ENCODE measurements at regions of chr1 and their contacts with region 1.

Region 1: DNA sequence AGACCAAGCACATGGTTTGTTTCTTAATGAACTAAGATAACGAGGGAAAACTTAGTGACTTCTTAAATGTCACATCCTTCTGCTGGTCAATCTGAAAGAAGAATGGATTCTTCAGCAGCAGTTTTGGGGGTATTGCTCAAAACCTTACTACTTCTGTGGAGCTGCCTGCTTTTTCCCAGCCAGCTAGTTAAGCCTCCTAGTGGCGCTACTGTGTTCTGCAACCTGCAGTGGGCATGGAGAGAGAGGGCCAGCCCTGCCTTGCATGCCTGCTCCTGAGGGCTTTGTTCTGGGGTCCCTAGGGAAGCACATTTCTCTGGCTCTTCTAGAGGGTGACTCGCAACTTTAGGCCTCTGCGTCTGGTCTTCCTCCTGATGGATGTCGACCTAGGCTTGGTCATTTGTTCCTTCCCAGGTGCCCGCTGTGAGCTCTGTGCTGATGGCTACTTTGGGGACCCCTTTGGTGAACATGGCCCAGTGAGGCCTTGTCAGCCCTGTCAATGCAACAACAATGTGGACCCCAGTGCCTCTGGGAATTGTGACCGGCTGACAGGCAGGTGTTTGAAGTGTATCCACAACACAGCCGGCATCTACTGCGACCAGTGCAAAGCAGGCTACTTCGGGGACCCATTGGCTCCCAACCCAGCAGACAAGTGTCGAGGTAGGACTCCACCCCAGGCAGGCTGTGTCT is 42.0 kb downstream of the LAMC2 start:
- DNase-seq: peak in 5 of 9 experiments; percentile 15 to 52 (median 37)
- ATAC-seq: peak; percentile 42
- H3K4me3 ChIP-seq: no peak overlapping the region
- H3K4me3 Mint-ChIP-seq: no peak overlapping the region
- H3K27ac ChIP-seq: no peak overlapping the region
- H3K27ac Mint-ChIP-seq: no peak overlapping the region
- H3K4me1 ChIP-seq: no peaks in the 10 kb centered on the region
- H3K4me1 Mint-ChIP-seq: no peaks in the 10 kb centered on the region
- H3K27me3 ChIP-seq: no peaks in the 10 kb centered on the region
- H3K27me3 Mint-ChIP-seq: peaks cover 3% of the 10 kb centered on the region
- CTCF ChIP-seq: peak; percentile 60

Region 2: DNA sequence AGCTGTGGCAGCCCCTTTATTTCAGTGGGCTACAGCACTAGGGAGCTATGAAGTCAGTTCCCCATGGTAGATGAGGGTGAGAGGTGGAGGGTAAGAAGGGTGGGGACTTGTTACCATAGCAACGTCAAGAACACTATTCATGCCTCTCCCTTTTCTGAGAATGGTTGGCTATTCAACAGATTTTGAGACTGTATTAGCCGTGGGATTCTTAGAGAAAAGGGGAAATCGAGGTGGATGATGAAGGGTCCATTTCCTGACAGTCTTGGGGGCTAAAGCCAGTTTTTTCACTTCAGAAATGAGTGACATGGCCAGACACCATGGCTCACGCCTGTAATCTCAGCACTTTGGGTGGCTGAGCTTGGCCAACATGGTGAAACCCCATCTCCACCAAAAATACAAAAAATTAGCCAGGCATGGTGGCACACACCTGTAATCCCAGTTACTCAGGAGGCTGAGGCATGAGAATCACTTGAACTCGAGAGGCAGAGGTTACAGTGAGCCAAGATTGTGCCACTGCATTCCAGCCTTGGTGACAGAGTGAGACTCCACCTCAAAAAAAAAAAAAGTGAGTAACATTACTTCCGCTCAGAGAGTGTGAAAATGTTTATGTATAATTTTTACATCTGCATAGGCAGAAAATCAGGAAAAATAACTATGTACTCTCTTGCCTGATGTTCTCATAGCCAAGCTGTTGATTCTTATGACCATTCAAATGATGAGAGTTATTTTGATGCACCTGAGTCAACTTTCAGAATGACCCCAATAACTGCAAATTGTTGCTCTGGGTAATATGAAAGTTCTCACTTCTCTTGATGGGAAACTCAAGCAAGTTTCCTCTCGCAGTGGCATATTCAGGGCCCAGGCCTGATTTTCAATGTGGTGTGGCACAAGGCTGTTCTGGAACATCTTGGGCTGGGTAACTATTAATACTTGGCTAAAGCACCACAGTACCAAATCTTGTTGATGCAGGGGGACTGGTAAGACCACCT is 801.4 kb before region 1 on chr1:
- CTCF ChIA-PET with region 1: no interaction called
- POLR2A ChIA-PET with region 1: no interaction called
- intact Hi-C with region 1: no loop called
- DNase-seq: peak in 2 of 9 experiments; percentile 15 to 50
- ATAC-seq: no peak
- H3K4me3 ChIP-seq: no peak overlapping the region
- H3K4me3 Mint-ChIP-seq: no peak overlapping the region
- H3K27ac ChIP-seq: peak overlapping the region in 1 of 2 experiments; percentile 69
- H3K27ac Mint-ChIP-seq: peak overlapping the region; percentile 79
- H3K4me1 ChIP-seq: peaks cover 14% of the 10 kb centered on the region
- H3K4me1 Mint-ChIP-seq: peaks cover 11% of the 10 kb centered on the region
- H3K27me3 ChIP-seq: no peaks in the 10 kb centered on the region
- H3K27me3 Mint-ChIP-seq: no peaks in the 10 kb centered on the region
- CTCF ChIP-seq: no peak

Region 3: GRCh38 chr1:182962554-182963115 is 265.5 kb before region 1 on chr1:
- CTCF ChIA-PET with region 1: interaction called, 6 read pairs
- POLR2A ChIA-PET with region 1: no interaction called
- intact Hi-C with region 1: loop called (anchors 2 to 5 kb)
- DNase-seq: peak in 3 of 9 experiments; percentile 20 to 39 (median 28)
- ATAC-seq: peak; percentile 57
- H3K4me3 ChIP-seq: no peak overlapping the region
- H3K4me3 Mint-ChIP-seq: no peak overlapping the region
- H3K27ac ChIP-seq: no peak overlapping the region
- H3K27ac Mint-ChIP-seq: no peak overlapping the region
- H3K4me1 ChIP-seq: no peaks in the 10 kb centered on the region
- H3K4me1 Mint-ChIP-seq: no peaks in the 10 kb centered on the region
- H3K27me3 ChIP-seq: peaks cover 0 to 2% of the 10 kb centered on the region in 2 experiments
- H3K27me3 Mint-ChIP-seq: peaks cover 9% of the 10 kb centered on the region
- CTCF ChIP-seq: peak; percentile 51

Region 4: GRCh38 chr1:183173828-183174227 is 54.3 kb before region 1 on chr1:
- CTCF ChIA-PET with region 1: interaction called, 4 read pairs
- POLR2A ChIA-PET with region 1: no interaction called
- intact Hi-C with region 1: loop called in 1 of 2 experiments (anchors 5 kb)
- DNase-seq: no peak
- ATAC-seq: no peak
- H3K4me3 ChIP-seq: no peak overlapping the region
- H3K4me3 Mint-ChIP-seq: no peak overlapping the region
- H3K27ac ChIP-seq: no peak overlapping the region
- H3K27ac Mint-ChIP-seq: no peak overlapping the region
- H3K4me1 ChIP-seq: no peaks in the 10 kb centered on the region
- H3K4me1 Mint-ChIP-seq: no peaks in the 10 kb centered on the region
- H3K27me3 ChIP-seq: no peaks in the 10 kb centered on the region
- H3K27me3 Mint-ChIP-seq: peaks cover 5% of the 10 kb centered on the region
- CTCF ChIP-seq: no peak

Region 5: DNA sequence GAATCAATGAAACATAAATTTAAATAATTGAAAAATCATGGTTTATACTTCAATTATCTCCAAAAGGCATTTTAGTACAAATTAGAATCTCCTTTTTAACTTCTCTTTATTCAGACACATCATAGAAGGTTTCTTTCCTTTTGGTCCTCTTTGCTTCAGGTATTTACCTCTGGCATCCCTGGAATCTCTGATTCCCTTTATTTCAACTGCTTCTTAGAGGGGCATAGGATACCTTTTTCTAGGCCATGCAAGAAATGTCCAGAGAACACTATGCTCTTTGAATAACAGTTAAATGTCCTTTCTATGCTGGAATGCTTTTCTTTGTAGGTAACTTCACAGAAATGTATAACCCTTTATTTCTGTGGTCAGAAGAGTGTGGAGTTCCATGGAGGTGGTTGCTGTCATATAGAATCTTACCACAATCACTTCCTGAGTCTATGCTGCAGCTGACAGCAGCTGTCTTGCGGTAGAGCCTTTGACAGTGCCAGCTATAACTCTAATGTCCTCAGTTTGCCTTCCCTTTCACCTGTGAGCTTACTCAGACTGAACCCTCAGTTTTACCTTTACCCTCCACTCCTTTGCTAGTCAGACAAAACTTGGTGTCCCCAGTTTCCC is 33.5 kb before region 1 on chr1:
- CTCF ChIA-PET with region 1: no interaction called
- POLR2A ChIA-PET with region 1: no interaction called
- intact Hi-C with region 1: loop called in 1 of 2 experiments (anchors 5 kb)
- DNase-seq: peak in 2 of 9 experiments; percentile 11 to 32
- ATAC-seq: peak; percentile 62
- H3K4me3 ChIP-seq: no peak overlapping the region
- H3K4me3 Mint-ChIP-seq: peak overlapping the region; percentile 32
- H3K27ac ChIP-seq: no peak overlapping the region
- H3K27ac Mint-ChIP-seq: no peak overlapping the region
- H3K4me1 ChIP-seq: peaks cover 12% of the 10 kb centered on the region
- H3K4me1 Mint-ChIP-seq: peaks cover 14% of the 10 kb centered on the region
- H3K27me3 ChIP-seq: no peaks in the 10 kb centered on the region
- H3K27me3 Mint-ChIP-seq: peaks cover 18% of the 10 kb centered on the region
- CTCF ChIP-seq: no peak

Region 6: GRCh38 chr1:183209533-183210158 is 18.5 kb before region 1 on chr1:
- CTCF ChIA-PET with region 1: no interaction called
- POLR2A ChIA-PET with region 1: no interaction called
- intact Hi-C with region 1: no loop called
- DNase-seq: no peak
- ATAC-seq: no peak
- H3K4me3 ChIP-seq: no peak overlapping the region
- H3K4me3 Mint-ChIP-seq: no peak overlapping the region
- H3K27ac ChIP-seq: no peak overlapping the region
- H3K27ac Mint-ChIP-seq: no peak overlapping the region
- H3K4me1 ChIP-seq: no peaks in the 10 kb centered on the region
- H3K4me1 Mint-ChIP-seq: peaks cover 3% of the 10 kb centered on the region
- H3K27me3 ChIP-seq: no peaks in the 10 kb centered on the region
- H3K27me3 Mint-ChIP-seq: peaks cover 12% of the 10 kb centered on the region
- CTCF ChIP-seq: no peak

Region 7: DNA sequence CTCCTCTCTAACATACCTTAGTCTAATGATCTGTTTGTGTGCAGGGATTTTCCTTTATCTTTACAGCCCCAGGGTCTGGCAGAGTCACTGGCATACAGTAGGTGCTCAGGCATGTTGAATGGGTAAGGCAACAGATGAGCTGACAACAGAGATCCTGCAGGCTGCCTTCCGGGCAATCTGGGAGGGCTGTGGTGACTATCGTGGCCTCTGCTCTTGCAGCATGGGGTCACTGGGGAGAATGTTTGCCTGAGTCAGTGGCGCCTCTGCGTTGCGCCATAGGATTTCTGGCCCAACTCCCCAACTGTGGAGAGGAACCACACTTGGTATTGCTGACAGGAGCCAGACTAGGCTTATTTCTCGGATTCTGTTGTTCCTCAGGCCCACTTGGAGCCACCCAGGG is 51.7 kb after region 1 on chr1:
- CTCF ChIA-PET with region 1: no interaction called
- POLR2A ChIA-PET with region 1: no interaction called
- intact Hi-C with region 1: no loop called
- DNase-seq: peak in 1 of 9 experiments; percentile 18
- ATAC-seq: no peak
- H3K4me3 ChIP-seq: no peak overlapping the region
- H3K4me3 Mint-ChIP-seq: no peak overlapping the region
- H3K27ac ChIP-seq: no peak overlapping the region
- H3K27ac Mint-ChIP-seq: no peak overlapping the region
- H3K4me1 ChIP-seq: no peaks in the 10 kb centered on the region
- H3K4me1 Mint-ChIP-seq: no peaks in the 10 kb centered on the region
- H3K27me3 ChIP-seq: no peaks in the 10 kb centered on the region
- H3K27me3 Mint-ChIP-seq: peaks cover 7% of the 10 kb centered on the region
- CTCF ChIP-seq: no peak